GM12878 (cell line): ENCODE measurements at regions of chr2 and their contacts with region 1.

Region 1: GRCh38 chr2:197740200-197740599 is 35.0 kb downstream of the MARS2 start:
- DNase-seq: no peak
- ATAC-seq: no peak
- H3K4me3 ChIP-seq: no peak overlapping the region
- H3K27ac ChIP-seq: no peak overlapping the region
- H3K4me1 ChIP-seq: no peaks in the 10 kb centered on the region
- H3K27me3 ChIP-seq: no peaks in the 10 kb centered on the region
- CTCF ChIP-seq: no peak
- EP300 ChIP-seq: no peak
- POLR2A ChIP-seq: no peak
- RAD21 ChIP-seq: no peak

Region 2: GRCh38 chr2:197339496-197340220 is 400.5 kb before region 1 on chr2:
- CTCF ChIA-PET with region 1: no interaction called
- POLR2A ChIA-PET with region 1: interaction called, 12 read pairs
- RAD21 ChIA-PET with region 1: no interaction called
- SMC1A ChIA-PET with region 1: no interaction called
- in situ Hi-C with region 1: no loop called
- intact Hi-C with region 1: no loop called
- DNase-seq: no peak
- ATAC-seq: no peak
- H3K4me3 ChIP-seq: no peak overlapping the region
- H3K27ac ChIP-seq: no peak overlapping the region
- H3K4me1 ChIP-seq: no peaks in the 10 kb centered on the region
- H3K27me3 ChIP-seq: no peaks in the 10 kb centered on the region
- CTCF ChIP-seq: no peak
- EP300 ChIP-seq: no peak
- POLR2A ChIP-seq: no peak
- RAD21 ChIP-seq: no peak